Sigmoid colon (tissue), 7 donors: ENCODE measurements at regions of chr6 and their contacts with region 1.

Region 1: DNA sequence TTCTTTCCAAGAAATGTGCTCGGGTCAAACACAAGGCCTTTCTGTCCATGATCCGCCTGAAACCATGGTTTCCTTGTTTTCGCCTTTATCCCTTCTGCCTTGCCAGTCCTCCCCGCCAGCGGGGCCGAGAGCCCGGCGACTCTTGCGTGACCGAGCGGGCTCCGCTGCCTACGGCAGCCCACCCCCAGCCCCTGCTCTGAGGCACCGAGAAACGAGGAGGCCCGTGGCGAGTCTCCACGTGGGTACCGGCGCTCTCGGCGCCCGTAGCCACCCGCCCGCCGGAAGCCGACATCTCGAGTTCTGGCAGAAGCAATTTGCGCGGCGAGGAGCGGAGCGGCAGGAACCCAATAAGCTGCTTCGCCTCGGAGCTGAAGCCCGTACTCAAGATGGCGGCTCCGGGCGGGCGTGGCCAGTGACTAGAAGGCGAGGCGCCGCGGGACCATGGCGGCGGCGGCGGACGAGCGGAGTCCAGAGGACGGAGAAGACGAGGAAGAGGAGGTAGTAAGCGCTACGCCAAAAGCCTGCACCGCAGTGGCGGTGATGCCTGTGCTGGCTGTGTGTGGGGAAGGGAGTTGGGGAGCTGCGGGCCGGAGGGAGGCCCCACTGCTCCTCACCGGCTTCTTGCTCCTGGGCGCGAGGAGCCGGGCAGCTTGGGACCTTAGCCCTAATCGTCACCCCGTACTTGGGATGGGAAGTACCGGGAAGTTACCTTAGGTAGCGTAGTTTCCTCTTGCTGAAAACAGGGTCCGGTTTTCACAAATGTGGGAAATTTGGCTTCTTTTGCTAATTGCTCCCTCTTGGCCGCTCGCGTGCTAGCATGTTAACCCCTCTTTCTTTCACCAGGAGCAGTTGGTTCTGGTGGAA is at the start of gene GTF3C6:
- DNase-seq: peak; percentile 96
- H3K4me3 ChIP-seq: peak within 1 kb of the TSS; percentile 51 to 98 (median 76)
- H3K27ac ChIP-seq: peak within 1 kb of the TSS; percentile 88 to 96 (median 90)
- H3K4me1 ChIP-seq: peaks cover 0 to 17% (median 12%) of the 10 kb centered on the region in 4 donors
- H3K27me3 ChIP-seq: no peaks in the 10 kb centered on the region
- CTCF ChIP-seq: no peak
- EP300 ChIP-seq: no peak
- POLR2A ChIP-seq: peak; percentile 49 to 55
- total RNA-seq, gene GTF3C6: 41.0 to 59.9 (median 47.9) TPM

Region 2: DNA sequence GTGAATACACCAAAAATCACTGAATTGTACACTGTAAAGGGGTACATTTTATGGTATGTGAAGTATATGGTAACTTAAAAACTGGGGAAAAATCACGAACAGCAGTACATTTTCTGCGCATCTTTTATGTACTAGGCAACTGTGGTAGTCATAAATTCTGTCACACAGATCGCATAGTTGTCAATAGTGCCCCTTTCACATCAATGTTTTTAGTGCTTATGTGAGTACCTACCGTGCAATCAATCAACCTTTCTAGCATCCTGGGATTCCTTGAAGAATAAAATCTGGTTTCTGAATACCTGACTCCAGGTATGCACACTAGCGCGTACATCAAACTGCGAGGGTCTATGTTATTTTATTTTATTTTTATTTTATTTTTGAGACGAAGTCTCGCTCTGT is 22.6 kb after region 1 on chr6:
- intact Hi-C with region 1: loop called (anchors 2 kb)
- DNase-seq: no peak
- H3K4me3 ChIP-seq: peak overlapping the region; percentile 78 to 94 (median 86)
- H3K27ac ChIP-seq: peak overlapping the region; percentile 86 to 93 (median 88)
- H3K4me1 ChIP-seq: peaks cover 0 to 12% (median 10%) of the 10 kb centered on the region in 4 donors
- H3K27me3 ChIP-seq: no peaks in the 10 kb centered on the region
- CTCF ChIP-seq: no peak
- EP300 ChIP-seq: no peak
- POLR2A ChIP-seq: no peak

Region 3: GRCh38 chr6:111154981-111155380 is 196.4 kb after region 1 on chr6:
- intact Hi-C with region 1: no loop called
- DNase-seq: no peak
- H3K4me3 ChIP-seq: no peak overlapping the region
- H3K27ac ChIP-seq: no peak overlapping the region
- H3K4me1 ChIP-seq: no peaks in the 10 kb centered on the region
- H3K27me3 ChIP-seq: no peaks in the 10 kb centered on the region
- CTCF ChIP-seq: no peak
- EP300 ChIP-seq: no peak
- POLR2A ChIP-seq: no peak